ENCODE measurements at regions of chr13 and their contacts with region 1.

Region 1: GRCh38 chr13:94967183-94968039 is 255.1 kb upstream of the SOX21 start:
- DNase-seq: peak in 1 of 2 experiments; percentile 81
- H3K4me3 ChIP-seq: peak overlapping the region; percentile 67 to 85 (median 68)
- H3K27ac ChIP-seq: no peak overlapping the region
- H3K4me1 ChIP-seq: peaks cover 0 to 10% (median 6%) of the 10 kb centered on the region in 4 experiments; a peak in 4 of 7 replicates
- H3K27me3 ChIP-seq: no peaks in the 10 kb centered on the region
- CTCF ChIP-seq: no peak
- EP300 ChIP-seq: no peak
- POLR2A ChIP-seq: no peak
- RAD21 ChIP-seq: no peak

Region 2: DNA sequence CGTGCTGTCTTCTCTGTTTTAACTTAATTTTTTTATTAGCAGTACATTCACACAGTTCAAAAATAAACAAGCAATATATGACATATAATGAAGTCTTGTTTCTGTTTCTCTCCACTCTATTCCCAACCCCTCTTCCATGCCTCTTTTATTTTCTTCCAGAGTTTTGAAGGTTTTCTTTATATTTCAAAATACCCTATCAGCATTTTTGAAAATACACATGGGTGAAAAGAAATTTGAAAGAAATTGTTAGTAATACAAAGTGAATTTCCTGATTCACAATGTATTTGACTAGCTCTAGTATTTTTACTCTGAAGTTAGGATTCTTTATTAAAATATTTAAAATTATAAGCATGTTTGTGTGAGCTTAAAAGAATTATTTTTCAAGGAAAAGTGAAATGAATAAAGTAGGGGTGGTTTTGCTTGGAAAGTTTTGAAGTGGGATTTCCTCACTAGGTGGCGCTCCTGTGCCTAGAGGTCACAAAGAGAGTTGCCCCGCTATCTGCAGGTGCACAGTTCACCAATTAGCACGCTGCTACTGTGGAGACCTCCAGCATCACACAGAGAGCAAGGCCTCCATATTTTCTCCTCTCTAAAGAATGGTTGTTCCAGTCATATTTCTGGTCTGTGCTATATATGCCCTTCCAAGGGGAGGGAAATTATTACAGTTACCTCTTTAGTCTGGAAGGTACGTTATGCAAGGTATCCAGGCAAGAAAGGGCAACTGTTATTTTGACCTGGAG is 292.6 kb before region 1 on chr13:
- CTCF ChIA-PET with region 1: interaction called, 19 read pairs
- POLR2A ChIA-PET with region 1: no interaction called
- DNase-seq: peak in 1 of 2 experiments; percentile 85
- H3K4me3 ChIP-seq: no peak overlapping the region
- H3K27ac ChIP-seq: no peak overlapping the region
- H3K4me1 ChIP-seq: peaks cover 0 to 3% (median 0%) of the 10 kb centered on the region in 4 experiments; a peak in 3 of 7 replicates
- H3K27me3 ChIP-seq: no peaks in the 10 kb centered on the region
- CTCF ChIP-seq: peak; percentile 57 to 78 (median 73)
- EP300 ChIP-seq: no peak
- POLR2A ChIP-seq: no peak
- RAD21 ChIP-seq: peak; percentile 85 to 87

Region 3: DNA sequence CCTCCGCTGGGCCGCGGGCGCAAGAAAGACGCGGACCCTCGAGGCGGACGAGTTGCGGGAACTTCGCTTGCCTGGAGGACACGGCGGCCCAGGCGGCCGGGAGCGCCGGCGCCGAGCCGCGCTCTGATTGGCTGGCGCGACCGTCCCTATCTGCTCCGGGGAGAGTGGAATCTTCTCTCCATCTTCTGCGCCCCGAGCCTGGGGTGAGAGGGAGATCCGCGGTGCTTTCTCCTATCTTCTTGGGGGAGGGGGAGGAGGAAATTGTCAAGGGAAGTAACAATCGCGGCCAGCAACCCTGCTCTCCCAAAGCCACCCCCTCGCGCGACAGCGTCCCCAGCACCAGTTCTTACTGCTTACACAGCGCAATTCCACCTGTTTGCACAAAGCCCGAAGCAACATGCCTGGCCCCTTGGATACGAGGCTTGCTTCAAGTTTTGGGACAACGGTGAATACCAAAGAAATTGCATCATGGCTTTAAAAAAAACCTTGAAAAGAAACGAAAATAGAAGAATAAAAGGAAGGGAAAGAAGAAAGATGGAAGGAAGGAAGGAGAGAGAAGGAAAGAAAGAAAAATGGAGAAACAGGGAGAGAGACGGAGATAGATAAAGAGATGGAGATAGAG is 259.9 kb before region 1 on chr13:
- CTCF ChIA-PET with region 1: interaction called, 6 read pairs
- POLR2A ChIA-PET with region 1: interaction called, 12 read pairs
- DNase-seq: peak in 1 of 2 experiments; percentile 79
- H3K4me3 ChIP-seq: peak overlapping the region; percentile 68 to 86 (median 76)
- H3K27ac ChIP-seq: no peak overlapping the region
- H3K4me1 ChIP-seq: peaks cover 0 to 24% (median 9%) of the 10 kb centered on the region in 4 experiments; a peak in 6 of 7 replicates
- H3K27me3 ChIP-seq: peaks cover 19 to 56% (median 44%) of the 10 kb centered on the region in 4 experiments; a peak in 6 of 7 replicates
- CTCF ChIP-seq: no peak
- EP300 ChIP-seq: no peak
- POLR2A ChIP-seq: no peak
- RAD21 ChIP-seq: no peak

Region 4: DNA sequence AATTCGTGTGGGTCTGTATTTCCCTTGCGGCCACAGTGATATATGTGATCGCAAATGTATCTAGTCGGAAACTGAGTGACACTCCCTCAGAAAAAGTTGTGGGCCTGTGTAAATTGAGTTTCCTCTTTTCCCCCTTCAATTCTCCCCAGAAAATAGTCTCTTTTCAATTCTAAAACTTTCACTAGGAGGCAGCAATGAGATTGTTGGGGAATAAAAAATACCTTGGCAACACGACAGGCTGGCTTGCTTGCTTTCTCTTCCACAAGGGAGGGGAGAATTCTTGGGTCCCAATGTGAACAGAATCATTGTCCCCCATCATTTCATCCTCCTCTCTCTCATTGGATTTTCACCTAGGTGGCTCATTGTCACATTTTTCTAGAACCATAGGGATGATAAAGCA is 251.4 kb before region 1 on chr13:
- CTCF ChIA-PET with region 1: interaction called, 11 read pairs
- POLR2A ChIA-PET with region 1: interaction called, 6 read pairs
- DNase-seq: no peak
- H3K4me3 ChIP-seq: no peak overlapping the region
- H3K27ac ChIP-seq: no peak overlapping the region
- H3K4me1 ChIP-seq: peaks cover 0 to 10% (median 4%) of the 10 kb centered on the region in 4 experiments; a peak in 5 of 7 replicates
- H3K27me3 ChIP-seq: peaks cover 0 to 33% (median 25%) of the 10 kb centered on the region in 4 experiments; a peak in 6 of 7 replicates
- CTCF ChIP-seq: peak in 2 of 3 experiments; percentile 24 to 34; a peak in 2 of 4 replicates
- EP300 ChIP-seq: no peak
- POLR2A ChIP-seq: no peak
- RAD21 ChIP-seq: peak; percentile 62 to 76

Region 5: GRCh38 chr13:94933230-94933751 is 34.1 kb before region 1 on chr13:
- CTCF ChIA-PET with region 1: interaction called, 11 read pairs
- POLR2A ChIA-PET with region 1: no interaction called
- DNase-seq: no peak
- H3K4me3 ChIP-seq: no peak overlapping the region
- H3K27ac ChIP-seq: no peak overlapping the region
- H3K4me1 ChIP-seq: no peaks in the 10 kb centered on the region
- H3K27me3 ChIP-seq: no peaks in the 10 kb centered on the region
- CTCF ChIP-seq: no peak
- EP300 ChIP-seq: no peak
- POLR2A ChIP-seq: no peak
- RAD21 ChIP-seq: no peak

Measured in H1 (cell line).